ENCODE measurements at regions of chrX and their contacts with region 1.

Region 1: GRCh38 chrX:103503163-103503852 is 16.0 kb downstream of the RAB40A start:
- DNase-seq: peak; percentile 57
- H3K4me3 ChIP-seq: no peak overlapping the region
- H3K27ac ChIP-seq: peak overlapping the region; percentile 50 to 95; a peak in 3 of 4 replicates
- H3K4me1 ChIP-seq: peaks cover 0 to 16% of the 10 kb centered on the region in 2 experiments; a peak in 2 of 4 replicates
- H3K27me3 ChIP-seq: no peaks in the 10 kb centered on the region; the same call in 1 of the 2 replicates
- CTCF ChIP-seq: peak; percentile 25; the same call in 1 of the 2 replicates
- EP300 ChIP-seq: peak in 1 of 2 experiments; percentile 53; a peak in 3 of 4 replicates
- RAD21 ChIP-seq: peak; percentile 24; the same call in 1 of the 2 replicates

Region 2: GRCh38 chrX:103488332-103488731 is 15.0 kb before region 1 on chrX:
- CTCF ChIA-PET with region 1: interaction called, 10 read pairs
- POLR2A ChIA-PET with region 1: no interaction called
- DNase-seq: peak; percentile 48
- H3K4me3 ChIP-seq: no peak overlapping the region
- H3K27ac ChIP-seq: no peak overlapping the region
- H3K4me1 ChIP-seq: no peaks in the 10 kb centered on the region; a peak in 1 of 4 replicates
- H3K27me3 ChIP-seq: no peaks in the 10 kb centered on the region
- CTCF ChIP-seq: peak; percentile 57
- EP300 ChIP-seq: no peak
- RAD21 ChIP-seq: peak; percentile 40; the same call in 1 of the 2 replicates

Region 3: GRCh38 chrX:103517246-103517645 is 13.9 kb after region 1 on chrX:
- CTCF ChIA-PET with region 1: no interaction called
- POLR2A ChIA-PET with region 1: no interaction called
- DNase-seq: no peak
- H3K4me3 ChIP-seq: no peak overlapping the region
- H3K27ac ChIP-seq: peak overlapping the region in 1 of 2 experiments; percentile 7; a peak in 1 of 4 replicates
- H3K4me1 ChIP-seq: no peaks in the 10 kb centered on the region
- H3K27me3 ChIP-seq: no peaks in the 10 kb centered on the region
- CTCF ChIP-seq: no peak
- EP300 ChIP-seq: no peak
- RAD21 ChIP-seq: no peak

Measured in SK-N-SH (cell line).